ENCODE measurements at regions of chr2 and their contacts with region 1.

Region 1: DNA sequence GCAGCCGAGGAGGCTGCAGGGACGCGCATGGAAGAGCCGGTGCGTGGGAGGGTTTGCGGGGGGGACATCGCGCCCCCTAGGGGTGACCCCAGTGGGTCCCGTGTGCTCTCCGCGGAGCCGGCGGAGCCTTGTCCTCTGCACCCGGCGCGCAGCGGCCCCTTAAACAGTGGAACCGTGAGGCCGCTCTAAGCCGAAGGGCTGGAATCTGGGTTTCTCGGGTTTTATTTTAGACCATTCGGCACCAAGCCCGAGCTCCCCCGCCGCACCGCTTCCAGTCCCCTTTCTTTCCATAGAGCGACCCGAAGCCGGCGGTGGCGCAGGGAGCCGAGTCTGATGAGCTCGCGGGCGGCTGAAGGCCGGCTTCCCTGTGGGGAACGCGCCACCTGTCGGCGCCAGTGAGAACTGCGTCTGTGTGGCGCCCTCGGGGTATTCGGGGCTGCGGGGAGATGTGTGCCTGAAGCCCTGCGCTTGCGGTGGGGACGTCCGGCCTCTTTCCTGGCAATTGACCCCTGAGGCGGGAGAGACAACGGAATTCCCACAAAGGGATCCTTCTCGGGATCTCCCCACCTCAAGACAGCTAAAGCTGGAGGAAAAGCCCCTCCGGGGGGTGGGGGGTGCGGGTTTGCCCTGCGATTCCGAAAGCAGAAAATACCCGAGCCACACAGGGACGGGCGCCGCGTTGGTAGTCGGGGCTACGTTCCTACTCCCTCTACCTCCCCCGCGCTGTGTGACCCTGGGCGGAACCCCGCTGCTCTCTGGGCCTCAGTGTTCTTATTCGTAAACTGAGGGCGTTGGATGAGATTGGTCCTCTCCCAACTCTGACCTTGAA is 8.2 kb upstream of the EN1 start:
- DNase-seq: peak; percentile 86
- ATAC-seq: peak; percentile 95
- H3K4me3 Mint-ChIP-seq: peak overlapping the region; percentile 48
- H3K27ac Mint-ChIP-seq: no peak overlapping the region
- H3K4me1 Mint-ChIP-seq: peaks cover 23% of the 10 kb centered on the region
- H3K27me3 Mint-ChIP-seq: peaks cover 75% of the 10 kb centered on the region
- CTCF ChIP-seq: peak; percentile 96

Region 2: GRCh38 chr2:118492335-118492734 is 363.3 kb before region 1 on chr2:
- CTCF ChIA-PET with region 1: interaction called, 17 read pairs
- POLR2A ChIA-PET with region 1: no interaction called
- intact Hi-C with region 1: no loop called
- DNase-seq: no peak
- ATAC-seq: no peak
- H3K4me3 Mint-ChIP-seq: no peak overlapping the region
- H3K27ac Mint-ChIP-seq: no peak overlapping the region
- H3K4me1 Mint-ChIP-seq: no peaks in the 10 kb centered on the region
- H3K27me3 Mint-ChIP-seq: peaks cover 4% of the 10 kb centered on the region
- CTCF ChIP-seq: peak; percentile 33

Region 3: GRCh38 chr2:118539290-118539689 is 316.4 kb before region 1 on chr2:
- CTCF ChIA-PET with region 1: interaction called, 5 read pairs
- POLR2A ChIA-PET with region 1: no interaction called
- intact Hi-C with region 1: loop called (anchors 5 kb)
- DNase-seq: peak; percentile 12
- ATAC-seq: no peak
- H3K4me3 Mint-ChIP-seq: no peak overlapping the region
- H3K27ac Mint-ChIP-seq: no peak overlapping the region
- H3K4me1 Mint-ChIP-seq: no peaks in the 10 kb centered on the region
- H3K27me3 Mint-ChIP-seq: no peaks in the 10 kb centered on the region
- CTCF ChIP-seq: no peak

Region 4: DNA sequence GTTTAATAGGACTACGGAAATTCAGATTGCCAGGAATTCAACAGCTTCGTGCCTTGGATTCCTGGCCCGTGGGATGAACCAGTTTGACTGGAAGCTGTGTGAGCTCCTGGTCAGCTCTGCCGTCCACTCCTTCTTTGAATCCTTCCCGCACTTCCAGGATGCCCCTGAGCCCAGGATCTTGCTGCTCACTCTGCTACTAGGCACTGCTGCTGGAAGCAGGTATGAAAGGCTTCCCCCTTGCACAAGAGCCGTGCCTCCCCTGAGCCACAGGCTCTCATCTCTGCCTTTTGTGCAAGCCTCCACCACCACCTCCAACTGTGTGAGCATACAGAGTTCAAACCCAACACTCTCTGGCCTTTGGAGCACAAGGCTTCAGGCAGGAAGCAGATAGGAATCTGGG is 43.1 kb before region 1 on chr2:
- CTCF ChIA-PET with region 1: no interaction called
- POLR2A ChIA-PET with region 1: no interaction called
- intact Hi-C with region 1: no loop called
- DNase-seq: no peak
- ATAC-seq: no peak
- H3K4me3 Mint-ChIP-seq: no peak overlapping the region
- H3K27ac Mint-ChIP-seq: no peak overlapping the region
- H3K4me1 Mint-ChIP-seq: no peaks in the 10 kb centered on the region
- H3K27me3 Mint-ChIP-seq: peaks cover 47% of the 10 kb centered on the region
- CTCF ChIP-seq: no peak

Region 5: GRCh38 chr2:118830121-118830520 is 25.5 kb before region 1 on chr2:
- CTCF ChIA-PET with region 1: interaction called, 10 read pairs
- POLR2A ChIA-PET with region 1: no interaction called
- intact Hi-C with region 1: no loop called
- DNase-seq: no peak
- ATAC-seq: no peak
- H3K4me3 Mint-ChIP-seq: no peak overlapping the region
- H3K27ac Mint-ChIP-seq: no peak overlapping the region
- H3K4me1 Mint-ChIP-seq: peaks cover 2% of the 10 kb centered on the region
- H3K27me3 Mint-ChIP-seq: peaks cover 60% of the 10 kb centered on the region
- CTCF ChIP-seq: no peak

Region 6: DNA sequence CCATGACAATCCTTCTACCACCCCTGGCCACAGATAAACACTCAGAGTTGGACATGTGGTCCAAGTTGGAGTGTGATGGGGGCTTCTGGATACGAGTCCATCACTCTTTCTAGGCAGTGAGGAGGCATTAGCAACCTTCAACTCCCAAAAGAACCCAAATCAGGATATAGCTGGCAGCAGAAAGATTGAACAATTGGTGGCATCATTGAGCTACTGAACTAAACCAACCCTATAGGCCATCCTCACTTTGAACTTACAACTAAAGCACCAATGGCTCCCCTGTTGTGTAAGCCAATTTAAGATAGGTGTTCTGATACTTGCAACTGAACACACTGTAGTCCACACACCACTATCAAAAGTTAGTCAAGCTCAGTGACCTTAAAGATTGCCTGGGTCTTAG is 62.4 kb after region 1 on chr2:
- CTCF ChIA-PET with region 1: no interaction called
- POLR2A ChIA-PET with region 1: no interaction called
- intact Hi-C with region 1: no loop called
- DNase-seq: no peak
- ATAC-seq: no peak
- H3K4me3 Mint-ChIP-seq: no peak overlapping the region
- H3K27ac Mint-ChIP-seq: no peak overlapping the region
- H3K4me1 Mint-ChIP-seq: peaks cover 2% of the 10 kb centered on the region
- H3K27me3 Mint-ChIP-seq: peaks cover 9% of the 10 kb centered on the region
- CTCF ChIP-seq: no peak